ENCODE measurements at regions of chr11 and their contacts with region 1.

Region 1: GRCh38 chr11:82900277-82901164 is at the start of gene PRCP:
- DNase-seq: peak; percentile 85
- ATAC-seq: peak; percentile 92
- H3K4me3 ChIP-seq: peak within 1 kb of the TSS; percentile 64
- H3K27ac ChIP-seq: peak within 1 kb of the TSS; percentile 75
- H3K4me1 ChIP-seq: 0 out of 2 replicates have a peak, but pooled peaks cover 1% of the 10 kb centered on the region
- H3K27me3 ChIP-seq: no peaks in the 10 kb centered on the region
- CTCF ChIP-seq: no peak
- POLR2A ChIP-seq: peak; percentile 63
- RAD21 ChIP-seq: no peak
- total RNA-seq, gene PRCP: 31.7 TPM in 2 replicates

Region 2: GRCh38 chr11:82775736-82776346 is 124.7 kb before region 1 on chr11:
- CTCF ChIA-PET with region 1: interaction called, 6 read pairs
- POLR2A ChIA-PET with region 1: no interaction called
- dilution Hi-C with region 1: no loop called
- in situ Hi-C with region 1: no loop called
- intact Hi-C with region 1: loop called (anchors 1 kb)
- DNase-seq: peak; percentile 47
- ATAC-seq: peak; percentile 98
- H3K4me3 ChIP-seq: no peak overlapping the region
- H3K27ac ChIP-seq: no peak overlapping the region
- H3K4me1 ChIP-seq: no peaks in the 10 kb centered on the region
- H3K27me3 ChIP-seq: no peaks in the 10 kb centered on the region
- CTCF ChIP-seq: peak; percentile 84
- POLR2A ChIP-seq: no peak
- RAD21 ChIP-seq: peak; percentile 69

Region 3: GRCh38 chr11:83156150-83156995 is 255.9 kb after region 1 on chr11:
- CTCF ChIA-PET with region 1: no interaction called
- POLR2A ChIA-PET with region 1: interaction called, 3 read pairs
- dilution Hi-C with region 1: no loop called
- in situ Hi-C with region 1: loop called (anchors 10 kb)
- intact Hi-C with region 1: loop called (anchors 2 kb)
- DNase-seq: peak; percentile 100
- ATAC-seq: peak; percentile 92
- H3K4me3 ChIP-seq: peak overlapping the region; percentile 58
- H3K27ac ChIP-seq: peak overlapping the region; percentile 60
- H3K4me1 ChIP-seq: peaks cover 3% of the 10 kb centered on the region
- H3K27me3 ChIP-seq: no peaks in the 10 kb centered on the region
- CTCF ChIP-seq: no peak
- POLR2A ChIP-seq: no peak
- RAD21 ChIP-seq: no peak

Region 4: DNA sequence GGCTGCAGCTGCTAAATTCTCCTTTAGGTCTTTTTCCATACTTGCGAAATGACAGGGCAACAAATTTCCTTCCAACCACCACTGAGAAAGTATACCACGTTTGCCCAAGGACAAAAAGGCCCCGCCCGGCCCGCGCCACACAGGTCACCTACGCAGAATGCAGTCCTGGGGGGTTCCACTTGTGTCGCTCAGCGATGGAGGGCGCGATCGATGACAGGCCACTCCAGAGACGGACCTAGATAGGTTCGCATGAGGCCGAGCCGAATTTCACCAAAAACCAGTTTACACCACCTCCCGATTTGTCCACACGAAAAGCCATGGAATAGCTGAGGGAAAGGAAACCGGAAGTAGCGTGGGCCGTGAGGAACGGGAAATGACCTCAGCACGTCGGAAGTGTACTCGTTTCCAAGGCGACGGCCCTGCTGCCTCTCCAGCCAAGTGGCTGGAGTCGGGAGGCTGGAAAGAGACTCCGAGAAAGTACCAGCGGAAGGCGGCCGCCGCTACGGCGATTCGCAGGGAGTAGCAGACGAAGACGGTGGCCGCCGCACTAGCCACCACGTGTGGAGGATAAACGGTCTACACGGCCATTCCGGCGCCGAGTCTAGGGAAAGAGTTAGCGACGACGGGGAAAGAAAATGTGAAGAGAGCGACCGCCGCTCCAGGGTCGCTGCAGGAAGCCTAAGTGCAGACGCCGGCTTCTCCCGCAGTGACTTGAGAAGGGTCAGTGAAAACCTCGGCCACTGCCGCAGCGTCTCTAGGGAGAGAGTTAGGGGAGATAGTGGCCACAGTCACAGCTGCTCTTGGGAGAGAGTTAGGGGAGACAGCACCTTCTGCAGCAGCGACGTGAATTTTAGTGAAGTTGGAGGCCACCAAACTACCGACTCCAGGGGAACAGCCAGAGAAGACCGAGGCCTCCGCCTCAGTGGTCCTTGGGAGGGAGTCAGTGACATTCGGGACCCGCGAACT is 293.1 kb after region 1 on chr11 and contains the start of gene ANKRD42:
- CTCF ChIA-PET with region 1: no interaction called
- POLR2A ChIA-PET with region 1: no interaction called
- dilution Hi-C with region 1: no loop called
- in situ Hi-C with region 1: no loop called
- intact Hi-C with region 1: loop called (anchors 2 kb)
- DNase-seq: peak; percentile 96
- ATAC-seq: peak; percentile 81
- H3K4me3 ChIP-seq: peak within 1 kb of the TSS; percentile 85
- H3K27ac ChIP-seq: peak within 1 kb of the TSS; percentile 99
- H3K4me1 ChIP-seq: peaks cover 4% of the 10 kb centered on the region; the same call in 1 of the 2 replicates
- H3K27me3 ChIP-seq: no peaks in the 10 kb centered on the region
- CTCF ChIP-seq: no peak
- POLR2A ChIP-seq: peak; percentile 86
- RAD21 ChIP-seq: peak; percentile 9; the same call in 1 of the 2 replicates
- total RNA-seq, gene ANKRD42: 5.6 and 6.9 TPM in 2 replicates

Measured in IMR-90 (cell line).